ENCODE measurements at regions of chr1 and their contacts with region 1.

Region 1: GRCh38 chr1:205061665-205062069 is 18.7 kb downstream of the CNTN2 start:
- DNase-seq: peak; percentile 47
- H3K4me3 Mint-ChIP-seq: no peak overlapping the region
- H3K27ac Mint-ChIP-seq: no peak overlapping the region
- H3K4me1 Mint-ChIP-seq: no peaks in the 10 kb centered on the region
- H3K27me3 Mint-ChIP-seq: no peaks in the 10 kb centered on the region

Region 2: GRCh38 chr1:204975570-204976235 is 86.0 kb before region 1 on chr1:
- intact Hi-C with region 1: loop called (anchors 1 kb)
- DNase-seq: peak; percentile 9
- H3K4me3 Mint-ChIP-seq: no peak overlapping the region
- H3K27ac Mint-ChIP-seq: no peak overlapping the region
- H3K4me1 Mint-ChIP-seq: no peaks in the 10 kb centered on the region
- H3K27me3 Mint-ChIP-seq: peaks cover 14% of the 10 kb centered on the region

Region 3: GRCh38 chr1:204989266-204990058 is 72.2 kb before region 1 on chr1:
- intact Hi-C with region 1: loop called (anchors 1 kb)
- DNase-seq: peak; percentile 44
- H3K4me3 Mint-ChIP-seq: no peak overlapping the region
- H3K27ac Mint-ChIP-seq: no peak overlapping the region
- H3K4me1 Mint-ChIP-seq: peaks cover 11% of the 10 kb centered on the region
- H3K27me3 Mint-ChIP-seq: peaks cover 2% of the 10 kb centered on the region